Thyroid gland (tissue), 4 donors: ENCODE measurements at regions of chr19 and their contacts with region 1.

Region 1: GRCh38 chr19:47243776-47244547 is 12.4 kb upstream of the CCDC9 start:
- DNase-seq: peak; percentile 83 to 86
- H3K4me3 ChIP-seq: no peak overlapping the region
- H3K27ac ChIP-seq: no peak overlapping the region
- H3K4me1 ChIP-seq: peaks cover 11 to 38% of the 10 kb centered on the region in 2 donors
- H3K27me3 ChIP-seq: no peaks in the 10 kb centered on the region
- CTCF ChIP-seq: peak; percentile 94 to 99 (median 98)
- POLR2A ChIP-seq: no peak

Region 2: GRCh38 chr19:47013041-47013517 is 230.9 kb before region 1 on chr19:
- intact Hi-C with region 1: loop called (anchors 10 kb)
- DNase-seq: peak; percentile 79 to 82
- H3K4me3 ChIP-seq: no peak overlapping the region
- H3K27ac ChIP-seq: no peak overlapping the region
- H3K4me1 ChIP-seq: peaks cover 0 to 4% of the 10 kb centered on the region in 2 donors
- H3K27me3 ChIP-seq: no peaks in the 10 kb centered on the region
- CTCF ChIP-seq: peak; percentile 89 to 98 (median 98)
- POLR2A ChIP-seq: no peak

Region 3: DNA sequence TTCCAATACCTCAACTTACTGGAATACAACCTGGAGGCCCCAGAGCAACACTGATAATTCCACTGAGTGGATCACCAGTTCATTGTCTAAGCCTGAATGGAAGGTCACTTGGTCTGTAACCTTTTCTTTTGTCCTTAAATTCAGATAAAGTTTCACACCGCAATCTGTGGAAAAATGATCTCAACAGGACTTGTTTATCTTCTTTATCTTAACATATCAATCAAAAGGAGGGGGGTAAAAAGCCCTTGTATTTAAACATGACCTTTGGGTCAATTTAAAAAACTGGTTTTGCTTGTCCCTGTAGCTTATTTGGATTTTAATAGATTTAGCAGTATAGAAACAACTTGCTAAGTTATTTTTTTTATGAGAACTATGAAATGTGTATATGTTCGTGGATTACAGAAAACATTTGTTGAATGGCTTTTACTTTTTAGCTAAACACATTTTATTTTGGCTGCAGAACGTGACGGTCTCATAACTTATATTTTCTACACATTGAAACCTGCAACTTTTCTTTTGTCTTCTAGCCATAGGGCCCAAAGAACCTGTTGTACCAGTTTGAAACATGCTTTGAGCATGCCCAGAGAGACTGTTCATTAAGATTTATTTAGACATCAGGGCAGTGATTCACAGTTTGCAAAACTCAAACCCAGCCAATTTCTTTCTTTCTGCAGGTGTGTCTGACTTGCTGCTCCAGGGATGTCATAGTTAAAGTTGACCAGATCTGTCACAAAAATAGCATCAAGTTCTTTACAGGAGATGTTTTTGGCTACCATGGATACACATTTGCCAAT is 91.5 kb before region 1 on chr19:
- intact Hi-C with region 1: loop called (anchors 5 kb)
- DNase-seq: no peak
- H3K4me3 ChIP-seq: no peak overlapping the region
- H3K27ac ChIP-seq: peak overlapping the region; percentile 34 to 68 (median 47)
- H3K4me1 ChIP-seq: peaks cover 21 to 22% of the 10 kb centered on the region in 2 donors
- H3K27me3 ChIP-seq: no peaks in the 10 kb centered on the region
- CTCF ChIP-seq: no peak
- POLR2A ChIP-seq: no peak

Region 4: GRCh38 chr19:47209319-47210179 is 34.4 kb before region 1 on chr19:
- intact Hi-C with region 1: loop called (anchors 5 kb)
- DNase-seq: no peak
- H3K4me3 ChIP-seq: no peak overlapping the region
- H3K27ac ChIP-seq: no peak overlapping the region
- H3K4me1 ChIP-seq: peaks cover 2 to 14% of the 10 kb centered on the region in 2 donors
- H3K27me3 ChIP-seq: no peaks in the 10 kb centered on the region
- CTCF ChIP-seq: no peak
- POLR2A ChIP-seq: no peak